CD4-positive, alpha-beta T cell (primary cell): ENCODE measurements at regions of chr5 and their contacts with region 1.

Region 1: DNA sequence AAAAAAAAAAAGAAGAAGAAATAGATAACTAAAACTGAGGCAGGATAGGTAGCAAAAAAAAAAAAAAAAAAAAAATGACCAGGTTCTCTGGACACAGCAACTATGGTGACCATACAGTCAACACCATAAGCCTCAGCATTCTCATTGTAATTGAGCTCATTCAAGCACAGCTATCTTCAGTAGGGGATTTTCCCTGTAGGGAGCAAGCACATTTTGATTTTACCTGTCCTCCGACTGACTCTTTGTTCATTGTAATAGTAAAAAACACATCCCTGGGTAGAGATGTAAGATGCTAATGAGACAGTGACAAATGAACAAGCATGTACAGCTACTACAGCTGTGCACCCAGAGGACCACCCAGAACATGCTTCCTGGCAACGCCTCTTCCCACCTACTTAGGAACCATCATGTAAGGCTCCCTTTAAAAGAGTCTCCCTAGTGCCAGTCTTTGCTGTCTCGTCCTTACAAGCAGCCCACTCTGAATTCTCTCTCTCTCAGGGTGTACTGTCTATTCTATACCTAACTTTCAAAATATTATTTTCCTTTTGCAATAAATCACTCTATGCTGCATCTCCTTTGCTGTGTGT is 64.9 kb upstream of the FBXW11 start:
- DNase-seq: peak in 1 of 14 experiments; percentile 52
- ATAC-seq: no peak
- H3K4me3 ChIP-seq: no peak overlapping the region
- H3K4me3 Mint-ChIP-seq: peak overlapping the region; percentile 23
- H3K27ac ChIP-seq: peak overlapping the region; percentile 23 to 61
- H3K27ac Mint-ChIP-seq: peak overlapping the region; percentile 89
- H3K4me1 ChIP-seq: peaks cover 33% of the 10 kb centered on the region
- H3K4me1 Mint-ChIP-seq: peaks cover 60% of the 10 kb centered on the region
- H3K27me3 ChIP-seq: no peaks in the 10 kb centered on the region
- H3K27me3 Mint-ChIP-seq: no peaks in the 10 kb centered on the region
- CTCF ChIP-seq: no peak

Region 2: DNA sequence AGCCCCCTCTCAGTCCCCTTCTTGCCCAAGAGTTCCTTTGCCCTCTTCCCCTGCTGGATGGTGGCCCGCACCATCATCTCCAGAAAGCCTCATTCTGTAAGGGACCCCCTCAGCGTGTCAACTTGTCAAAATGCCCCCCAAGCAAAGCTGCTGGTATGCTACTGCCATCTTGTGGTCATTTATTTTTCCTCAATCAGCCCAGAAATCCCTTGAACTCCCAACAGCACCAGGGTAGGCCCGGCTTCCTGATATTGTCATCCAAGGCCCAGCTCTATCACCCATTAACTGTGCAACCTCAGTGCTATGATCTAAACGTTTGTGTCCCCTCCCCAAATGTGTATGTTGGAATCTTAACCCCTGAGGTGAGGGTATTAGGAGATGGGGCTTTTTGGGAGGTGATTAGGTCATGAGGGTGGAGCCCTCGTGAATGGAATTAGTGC is 11.7 kb before region 1 on chr5:
- CTCF ChIA-PET with region 1: interaction called, 13 read pairs
- POLR2A ChIA-PET with region 1: interaction called, 23 read pairs
- intact Hi-C with region 1: no loop called
- DNase-seq: peak in 3 of 14 experiments; percentile 23 to 48 (median 45)
- ATAC-seq: no peak
- H3K4me3 ChIP-seq: no peak overlapping the region
- H3K4me3 Mint-ChIP-seq: no peak overlapping the region
- H3K27ac ChIP-seq: peak overlapping the region in 1 of 2 donors; percentile 22
- H3K27ac Mint-ChIP-seq: peak overlapping the region; percentile 31
- H3K4me1 ChIP-seq: peaks cover 7% of the 10 kb centered on the region
- H3K4me1 Mint-ChIP-seq: peaks cover 59% of the 10 kb centered on the region
- H3K27me3 ChIP-seq: no peaks in the 10 kb centered on the region
- H3K27me3 Mint-ChIP-seq: no peaks in the 10 kb centered on the region
- CTCF ChIP-seq: peak; percentile 53